Activated naive CD4-positive, alpha-beta T cell treated with anti-CD3 and anti-CD28 coated beads for 36 hours (primary cell): ENCODE measurements at regions of chrX and their contacts with region 1.

Region 1: GRCh38 chrX:915427-916229 is 285.0 kb downstream of the SHOX start:
- DNase-seq: peak; percentile 50
- H3K4me3 Mint-ChIP-seq: no peak overlapping the region
- H3K27ac Mint-ChIP-seq: no peak overlapping the region
- H3K4me1 Mint-ChIP-seq: no peaks in the 10 kb centered on the region
- H3K27me3 Mint-ChIP-seq: no peaks in the 10 kb centered on the region

Region 2: DNA sequence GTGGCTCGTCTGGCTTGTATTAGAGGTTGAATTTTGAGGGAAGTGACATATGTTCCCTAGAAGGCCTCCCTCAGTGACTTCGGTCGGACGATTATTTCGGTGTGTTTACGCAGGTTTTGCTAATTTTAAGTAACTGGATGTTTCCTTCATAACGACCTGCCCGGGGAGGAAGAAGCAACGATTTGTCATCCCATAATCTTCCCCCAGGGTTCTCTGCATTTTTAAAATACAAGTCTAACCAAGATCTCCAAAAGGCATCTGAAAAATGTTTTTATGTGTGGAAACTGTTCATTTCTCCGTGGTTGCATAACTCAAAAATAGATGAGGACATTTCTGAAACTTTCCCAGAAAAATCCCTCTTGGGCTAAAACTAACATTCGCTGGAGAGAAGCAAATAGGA is 89.6 kb before region 1 on chrX:
- CTCF ChIA-PET with region 1: no interaction called
- intact Hi-C with region 1: no loop called
- DNase-seq: no peak
- H3K4me3 Mint-ChIP-seq: no peak overlapping the region
- H3K27ac Mint-ChIP-seq: no peak overlapping the region
- H3K4me1 Mint-ChIP-seq: no peaks in the 10 kb centered on the region
- H3K27me3 Mint-ChIP-seq: no peaks in the 10 kb centered on the region

Region 3: DNA sequence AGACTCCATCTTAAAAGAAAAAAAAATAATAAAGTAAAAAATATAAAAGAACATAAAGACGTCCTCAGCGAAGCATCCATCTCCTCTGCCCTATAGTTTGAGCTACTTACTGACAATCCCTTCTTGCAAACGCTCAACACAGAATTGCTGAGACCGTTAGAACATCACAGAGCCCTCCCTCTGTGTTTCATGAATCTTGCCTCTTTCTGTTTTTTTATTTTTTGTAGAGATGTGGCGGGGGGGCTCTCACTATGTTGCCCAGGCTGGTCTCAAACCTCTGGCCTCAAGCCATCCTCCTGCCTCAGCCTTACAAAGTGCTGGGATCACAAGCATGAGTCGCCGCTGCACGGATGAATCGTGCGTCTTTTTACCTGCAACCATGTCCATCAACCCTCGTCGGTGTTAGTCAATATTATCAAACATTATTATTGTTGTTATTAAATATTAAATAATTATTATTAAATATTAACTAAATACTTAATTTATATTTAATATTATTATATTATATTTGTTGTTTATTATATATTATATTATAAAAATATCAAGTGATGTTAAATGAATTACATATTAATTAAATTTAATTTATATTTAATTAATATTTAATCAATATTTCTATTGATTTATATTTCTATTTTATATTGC is 96.1 kb after region 1 on chrX:
- CTCF ChIA-PET with region 1: no interaction called
- intact Hi-C with region 1: loop called (anchors 10 kb)
- DNase-seq: peak; percentile 10
- H3K4me3 Mint-ChIP-seq: no peak overlapping the region
- H3K27ac Mint-ChIP-seq: no peak overlapping the region
- H3K4me1 Mint-ChIP-seq: no peaks in the 10 kb centered on the region
- H3K27me3 Mint-ChIP-seq: no peaks in the 10 kb centered on the region